ENCODE measurements at regions of chr12 and their contacts with region 1.

Region 1: DNA sequence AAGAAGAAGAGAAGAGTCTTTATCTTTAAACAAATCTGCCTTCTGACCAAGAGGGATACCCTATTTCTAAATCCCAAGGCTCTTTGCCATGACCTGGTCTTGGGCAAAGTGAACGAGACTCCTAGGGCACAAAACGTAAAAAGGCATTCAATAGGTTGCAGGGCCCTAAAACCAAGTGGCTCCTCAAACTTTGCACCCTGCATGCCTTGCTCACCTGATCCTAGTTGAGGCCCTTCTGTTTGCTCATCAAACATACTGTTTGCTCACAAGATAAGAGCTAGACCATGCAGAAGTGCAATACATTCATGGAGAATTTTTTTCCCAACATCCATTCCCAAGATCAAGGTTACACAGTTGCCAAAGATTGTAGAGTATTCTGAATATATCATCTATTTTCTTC is 7.9 kb upstream of the PRH1 start:
- DNase-seq: no peak
- ATAC-seq: no peak
- H3K4me3 ChIP-seq: no peak overlapping the region
- H3K4me3 Mint-ChIP-seq: no peak overlapping the region
- H3K27ac ChIP-seq: no peak overlapping the region
- H3K27ac Mint-ChIP-seq: no peak overlapping the region
- H3K4me1 ChIP-seq: no peaks in the 10 kb centered on the region
- H3K4me1 Mint-ChIP-seq: no peaks in the 10 kb centered on the region
- H3K27me3 ChIP-seq: no peaks in the 10 kb centered on the region
- H3K27me3 Mint-ChIP-seq: no peaks in the 10 kb centered on the region
- CTCF ChIP-seq: no peak

Region 2: GRCh38 chr12:10190558-10191388 is 701.2 kb before region 1 on chr12:
- CTCF ChIA-PET with region 1: no interaction called
- POLR2A ChIA-PET with region 1: no interaction called
- intact Hi-C with region 1: no loop called
- DNase-seq: peak in 8 of 9 experiments; percentile 30 to 77 (median 58)
- ATAC-seq: peak; percentile 99
- H3K4me3 ChIP-seq: no peak overlapping the region
- H3K4me3 Mint-ChIP-seq: no peak overlapping the region
- H3K27ac ChIP-seq: no peak overlapping the region
- H3K27ac Mint-ChIP-seq: no peak overlapping the region
- H3K4me1 ChIP-seq: no peaks in the 10 kb centered on the region
- H3K4me1 Mint-ChIP-seq: peaks cover 6% of the 10 kb centered on the region
- H3K27me3 ChIP-seq: peaks cover 0 to 5% of the 10 kb centered on the region in 2 experiments
- H3K27me3 Mint-ChIP-seq: peaks cover 12% of the 10 kb centered on the region
- CTCF ChIP-seq: peak; percentile 83

Region 3: DNA sequence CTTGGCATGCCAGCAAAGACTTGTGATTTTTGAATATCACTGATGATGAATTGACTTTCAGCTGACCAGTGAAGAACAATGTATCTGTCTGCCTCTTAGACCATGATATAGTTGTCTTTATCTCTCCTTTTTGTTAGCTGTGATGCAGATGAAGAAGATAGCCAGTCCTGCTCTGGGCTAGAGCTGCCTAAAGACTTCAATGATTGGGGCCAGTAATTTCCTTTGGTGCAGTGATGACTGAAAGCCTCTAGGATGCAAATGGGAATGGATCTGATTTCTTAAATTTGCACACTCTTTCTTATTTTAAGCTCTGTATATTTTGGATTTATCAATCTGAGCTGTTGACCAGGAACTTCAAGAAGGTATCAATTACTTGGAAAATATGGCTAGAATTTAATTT is 81.9 kb before region 1 on chr12 and contains the start of gene TAS2R9:
- CTCF ChIA-PET with region 1: no interaction called
- POLR2A ChIA-PET with region 1: no interaction called
- intact Hi-C with region 1: no loop called
- DNase-seq: no peak
- ATAC-seq: no peak
- H3K4me3 ChIP-seq: no peak within 1 kb of the TSS
- H3K4me3 Mint-ChIP-seq: no peak within 1 kb of the TSS
- H3K27ac ChIP-seq: no peak within 1 kb of the TSS
- H3K27ac Mint-ChIP-seq: no peak within 1 kb of the TSS
- H3K4me1 ChIP-seq: no peaks in the 10 kb centered on the region
- H3K4me1 Mint-ChIP-seq: no peaks in the 10 kb centered on the region
- H3K27me3 ChIP-seq: no peaks in the 10 kb centered on the region
- H3K27me3 Mint-ChIP-seq: peaks cover 28% of the 10 kb centered on the region
- CTCF ChIP-seq: no peak
- total RNA-seq, gene TAS2R9: not detected

Region 4: GRCh38 chr12:10829994-10830393 is 61.9 kb before region 1 on chr12:
- CTCF ChIA-PET with region 1: no interaction called
- POLR2A ChIA-PET with region 1: no interaction called
- intact Hi-C with region 1: loop called (anchors 2 to 5 kb)
- DNase-seq: no peak
- ATAC-seq: no peak
- H3K4me3 ChIP-seq: no peak overlapping the region
- H3K4me3 Mint-ChIP-seq: no peak overlapping the region
- H3K27ac ChIP-seq: no peak overlapping the region
- H3K27ac Mint-ChIP-seq: no peak overlapping the region
- H3K4me1 ChIP-seq: no peaks in the 10 kb centered on the region
- H3K4me1 Mint-ChIP-seq: no peaks in the 10 kb centered on the region
- H3K27me3 ChIP-seq: no peaks in the 10 kb centered on the region
- H3K27me3 Mint-ChIP-seq: no peaks in the 10 kb centered on the region
- CTCF ChIP-seq: no peak

Region 5: GRCh38 chr12:10838461-10838860 is 53.5 kb before region 1 on chr12:
- CTCF ChIA-PET with region 1: no interaction called
- POLR2A ChIA-PET with region 1: interaction called, 3 read pairs
- intact Hi-C with region 1: loop called in 1 of 2 experiments (anchors 5 kb)
- DNase-seq: no peak
- ATAC-seq: no peak
- H3K4me3 ChIP-seq: no peak overlapping the region
- H3K4me3 Mint-ChIP-seq: no peak overlapping the region
- H3K27ac ChIP-seq: no peak overlapping the region
- H3K27ac Mint-ChIP-seq: no peak overlapping the region
- H3K4me1 ChIP-seq: no peaks in the 10 kb centered on the region
- H3K4me1 Mint-ChIP-seq: no peaks in the 10 kb centered on the region
- H3K27me3 ChIP-seq: no peaks in the 10 kb centered on the region
- H3K27me3 Mint-ChIP-seq: no peaks in the 10 kb centered on the region
- CTCF ChIP-seq: no peak

Measured in CD8-positive, alpha-beta T cell (primary cell).